Prostate gland (tissue), 2 donors: ENCODE measurements at regions of chr2 and their contacts with region 1.

Region 1: GRCh38 chr2:204260162-204260877 is 285.0 kb upstream of the PARD3B start:
- DNase-seq: peak; percentile 26
- H3K4me3 ChIP-seq: no peak overlapping the region
- H3K27ac ChIP-seq: no peak overlapping the region
- H3K4me1 ChIP-seq: no peaks in the 10 kb centered on the region
- H3K27me3 ChIP-seq: no peaks in the 10 kb centered on the region
- CTCF ChIP-seq: peak; percentile 28 to 68 (median 62)
- POLR2A ChIP-seq: no peak

Region 2: DNA sequence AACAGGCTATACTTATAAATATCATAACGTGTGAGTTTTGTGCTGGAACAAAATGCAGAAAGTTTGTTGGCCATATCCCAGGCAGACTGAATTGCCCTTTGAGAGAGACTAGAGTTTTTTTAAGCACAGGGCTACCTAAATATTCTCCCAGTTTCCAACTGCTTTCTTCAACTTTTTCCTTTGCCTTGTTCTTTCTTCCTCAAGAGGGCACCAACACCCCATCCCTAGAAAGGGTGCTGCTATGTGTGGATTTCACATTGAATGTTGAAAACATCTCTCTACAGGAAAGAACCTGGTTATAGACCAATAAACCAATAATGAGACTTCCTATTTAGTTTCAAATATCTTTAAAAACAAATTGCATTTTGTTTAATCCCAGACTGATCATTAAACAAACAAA is 235.8 kb before region 1 on chr2:
- intact Hi-C with region 1: loop called (anchors 10 kb)
- DNase-seq: peak; percentile 37
- H3K4me3 ChIP-seq: no peak overlapping the region
- H3K27ac ChIP-seq: no peak overlapping the region
- H3K4me1 ChIP-seq: no peaks in the 10 kb centered on the region
- H3K27me3 ChIP-seq: no peaks in the 10 kb centered on the region
- CTCF ChIP-seq: peak in 3 of 4 experiments; percentile 40 to 72 (median 61)
- POLR2A ChIP-seq: no peak

Region 3: DNA sequence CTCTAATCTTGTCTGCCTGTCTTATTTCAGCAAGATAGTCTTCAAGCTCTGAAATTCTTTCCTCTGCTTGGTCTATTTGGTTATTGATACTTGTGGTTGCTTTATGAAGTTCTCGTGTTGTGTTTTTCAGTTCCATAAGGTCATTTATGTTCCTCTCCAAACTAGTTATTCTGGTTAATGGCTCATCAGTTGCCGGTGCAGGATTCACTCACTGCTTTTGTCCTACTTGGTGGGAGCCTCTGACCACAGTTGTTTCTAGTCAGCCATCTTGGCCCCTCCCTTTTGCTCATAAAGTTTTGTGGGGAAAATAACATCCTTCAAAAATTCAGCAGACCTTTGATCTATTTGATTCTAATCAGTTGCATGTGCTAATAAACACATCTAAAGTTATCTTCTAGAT is 126.3 kb after region 1 on chr2:
- intact Hi-C with region 1: no loop called
- DNase-seq: no peak
- H3K4me3 ChIP-seq: no peak overlapping the region
- H3K27ac ChIP-seq: no peak overlapping the region
- H3K4me1 ChIP-seq: no peaks in the 10 kb centered on the region
- H3K27me3 ChIP-seq: no peaks in the 10 kb centered on the region
- CTCF ChIP-seq: no peak
- POLR2A ChIP-seq: no peak

Region 4: GRCh38 chr2:204491528-204491927 is 231.2 kb after region 1 on chr2:
- intact Hi-C with region 1: no loop called
- DNase-seq: no peak
- H3K4me3 ChIP-seq: no peak overlapping the region
- H3K27ac ChIP-seq: no peak overlapping the region
- H3K4me1 ChIP-seq: no peaks in the 10 kb centered on the region
- H3K27me3 ChIP-seq: no peaks in the 10 kb centered on the region
- CTCF ChIP-seq: no peak
- POLR2A ChIP-seq: no peak

Region 5: DNA sequence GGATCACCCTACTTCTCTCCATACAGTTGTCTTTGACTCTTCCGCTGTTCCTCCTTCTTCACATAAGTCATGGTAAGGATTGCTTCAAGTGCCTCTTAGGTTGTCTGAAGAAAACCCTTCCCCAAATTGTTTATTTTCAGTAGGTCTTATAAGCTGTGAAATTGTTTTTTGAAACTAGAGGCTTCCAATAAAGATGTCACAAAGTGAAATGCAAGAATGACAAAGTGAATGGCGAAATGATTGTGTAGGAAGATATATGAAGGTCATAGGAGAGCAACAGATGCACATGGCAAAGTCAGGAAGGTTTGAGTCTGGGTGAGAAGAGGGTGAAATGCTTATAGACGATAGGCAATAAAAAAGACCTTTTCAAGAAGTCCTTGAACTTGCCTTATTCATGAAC is 833.7 kb after region 1 on chr2:
- intact Hi-C with region 1: no loop called
- DNase-seq: no peak
- H3K4me3 ChIP-seq: no peak overlapping the region
- H3K27ac ChIP-seq: no peak overlapping the region
- H3K4me1 ChIP-seq: no peaks in the 10 kb centered on the region
- H3K27me3 ChIP-seq: no peaks in the 10 kb centered on the region
- CTCF ChIP-seq: no peak
- POLR2A ChIP-seq: no peak